ENCODE measurements at regions of chr11 and their contacts with region 1.

Region 1: DNA sequence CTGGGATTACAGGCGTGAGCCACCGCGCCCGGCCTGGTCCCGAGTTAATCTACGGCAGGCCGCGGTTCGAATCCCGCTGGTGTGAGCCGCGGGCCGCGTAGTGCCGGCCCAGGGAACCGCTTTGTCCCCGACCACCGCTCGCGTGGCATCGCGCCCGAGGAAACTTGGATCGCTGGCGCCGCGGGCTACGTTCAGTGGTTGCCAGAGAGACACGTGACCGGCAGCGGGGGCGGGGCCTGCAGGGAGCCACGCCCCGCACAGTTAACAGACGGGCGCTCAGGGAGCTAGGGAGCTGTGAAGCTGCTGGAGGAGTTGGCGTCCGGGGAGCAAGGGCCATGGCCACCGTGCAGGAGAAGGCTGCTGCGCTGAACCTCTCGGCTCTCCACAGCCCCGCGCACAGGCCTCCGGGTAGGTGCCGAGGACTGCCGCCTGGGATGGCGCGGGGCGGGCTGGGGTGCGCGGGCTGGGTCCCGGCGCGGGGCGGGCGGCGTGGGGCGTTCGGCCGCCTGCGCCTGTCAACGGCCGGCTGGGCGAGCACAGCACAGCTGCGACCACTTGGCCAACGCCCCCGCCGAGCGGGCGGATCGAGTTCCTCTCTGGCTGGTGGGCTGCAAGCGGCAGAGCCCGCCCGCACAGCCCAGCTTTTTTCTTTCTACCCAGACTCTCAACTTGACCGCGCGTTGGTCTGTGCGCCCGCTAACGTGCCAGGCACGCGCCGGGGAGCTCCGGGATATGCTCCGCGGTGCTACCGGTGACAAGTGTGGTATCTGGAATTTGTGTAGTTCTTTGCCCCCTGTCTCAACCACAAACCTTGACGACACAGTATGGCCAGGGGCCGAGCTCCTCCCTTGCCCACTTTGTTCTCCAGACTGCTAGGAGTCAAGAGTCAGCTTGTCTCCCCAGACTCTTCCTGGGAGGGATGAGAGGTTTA is at the start of gene DEPDC7:
- DNase-seq: peak; percentile 94 to 96
- H3K4me3 ChIP-seq: peak within 1 kb of the TSS; percentile 73
- H3K4me3 Mint-ChIP-seq: peak within 1 kb of the TSS; percentile 98
- H3K27ac Mint-ChIP-seq: peak within 1 kb of the TSS; percentile 87
- H3K4me1 ChIP-seq: peaks cover 26% of the 10 kb centered on the region; the same call in 1 of the 2 replicates
- H3K4me1 Mint-ChIP-seq: peaks cover 19% of the 10 kb centered on the region
- H3K27me3 ChIP-seq: no peaks in the 10 kb centered on the region
- H3K27me3 Mint-ChIP-seq: no peaks in the 10 kb centered on the region
- CTCF ChIP-seq: no peak
- total RNA-seq, gene DEPDC7: 17.0 and 17.2 TPM in 2 replicates

Region 2: DNA sequence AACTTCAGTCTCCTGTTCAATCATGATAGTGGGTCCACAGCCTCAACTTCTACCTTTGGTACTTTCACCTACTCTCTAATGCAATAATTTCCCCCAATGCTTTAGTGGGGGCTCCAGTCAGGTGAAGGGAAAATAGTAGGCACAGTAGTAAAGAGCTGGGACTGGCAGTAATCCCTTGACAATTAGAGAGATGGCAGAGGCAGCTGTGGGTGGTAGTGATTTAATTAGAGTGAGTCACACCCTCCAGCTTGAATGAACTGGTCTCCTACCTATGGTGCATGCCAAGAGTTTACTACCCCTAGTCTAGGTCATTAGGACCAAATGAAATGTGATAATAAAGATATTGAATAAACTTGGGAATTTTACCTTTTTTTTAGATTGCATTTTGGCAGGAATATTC is 177.4 kb before region 1 on chr11:
- CTCF ChIA-PET with region 1: no interaction called
- POLR2A ChIA-PET with region 1: no interaction called
- intact Hi-C with region 1: no loop called
- DNase-seq: no peak
- H3K4me3 ChIP-seq: no peak overlapping the region
- H3K4me3 Mint-ChIP-seq: no peak overlapping the region
- H3K27ac Mint-ChIP-seq: no peak overlapping the region
- H3K4me1 ChIP-seq: peaks cover 10% of the 10 kb centered on the region
- H3K4me1 Mint-ChIP-seq: peaks cover 9% of the 10 kb centered on the region
- H3K27me3 ChIP-seq: no peaks in the 10 kb centered on the region
- H3K27me3 Mint-ChIP-seq: no peaks in the 10 kb centered on the region
- CTCF ChIP-seq: no peak

Region 3: GRCh38 chr11:32960553-32961164 is 55.2 kb before region 1 on chr11:
- CTCF ChIA-PET with region 1: no interaction called
- POLR2A ChIA-PET with region 1: no interaction called
- intact Hi-C with region 1: loop called (anchors 2 kb)
- DNase-seq: peak in 1 of 2 experiments; percentile 40
- H3K4me3 ChIP-seq: no peak overlapping the region
- H3K4me3 Mint-ChIP-seq: no peak overlapping the region
- H3K27ac Mint-ChIP-seq: no peak overlapping the region
- H3K4me1 ChIP-seq: no peaks in the 10 kb centered on the region
- H3K4me1 Mint-ChIP-seq: no peaks in the 10 kb centered on the region
- H3K27me3 ChIP-seq: no peaks in the 10 kb centered on the region
- H3K27me3 Mint-ChIP-seq: no peaks in the 10 kb centered on the region
- CTCF ChIP-seq: peak; percentile 58 to 60

Region 4: GRCh38 chr11:33027846-33028536 is 12.1 kb after region 1 on chr11:
- CTCF ChIA-PET with region 1: no interaction called
- POLR2A ChIA-PET with region 1: interaction called, 6 read pairs
- intact Hi-C with region 1: loop called (anchors 1 kb)
- DNase-seq: no peak
- H3K4me3 ChIP-seq: no peak overlapping the region
- H3K4me3 Mint-ChIP-seq: peak overlapping the region; percentile 38
- H3K27ac Mint-ChIP-seq: peak overlapping the region; percentile 74
- H3K4me1 ChIP-seq: peaks cover 22% of the 10 kb centered on the region
- H3K4me1 Mint-ChIP-seq: peaks cover 25% of the 10 kb centered on the region
- H3K27me3 ChIP-seq: no peaks in the 10 kb centered on the region
- H3K27me3 Mint-ChIP-seq: no peaks in the 10 kb centered on the region
- CTCF ChIP-seq: no peak

Region 5: GRCh38 chr11:33039274-33040032 is 23.6 kb after region 1 on chr11 and contains the start of gene TCP11L1:
- CTCF ChIA-PET with region 1: interaction called, 15 read pairs
- POLR2A ChIA-PET with region 1: interaction called, 31 read pairs
- intact Hi-C with region 1: loop called (anchors 1 kb)
- DNase-seq: peak; percentile 93 to 94
- H3K4me3 ChIP-seq: peak within 1 kb of the TSS; percentile 80
- H3K4me3 Mint-ChIP-seq: peak within 1 kb of the TSS; percentile 80
- H3K27ac Mint-ChIP-seq: peak within 1 kb of the TSS; percentile 96
- H3K4me1 ChIP-seq: peaks cover 24% of the 10 kb centered on the region
- H3K4me1 Mint-ChIP-seq: peaks cover 19% of the 10 kb centered on the region
- H3K27me3 ChIP-seq: no peaks in the 10 kb centered on the region
- H3K27me3 Mint-ChIP-seq: no peaks in the 10 kb centered on the region
- CTCF ChIP-seq: no peak
- total RNA-seq, gene TCP11L1: 22.8 and 25.0 TPM in 2 replicates

Region 6: DNA sequence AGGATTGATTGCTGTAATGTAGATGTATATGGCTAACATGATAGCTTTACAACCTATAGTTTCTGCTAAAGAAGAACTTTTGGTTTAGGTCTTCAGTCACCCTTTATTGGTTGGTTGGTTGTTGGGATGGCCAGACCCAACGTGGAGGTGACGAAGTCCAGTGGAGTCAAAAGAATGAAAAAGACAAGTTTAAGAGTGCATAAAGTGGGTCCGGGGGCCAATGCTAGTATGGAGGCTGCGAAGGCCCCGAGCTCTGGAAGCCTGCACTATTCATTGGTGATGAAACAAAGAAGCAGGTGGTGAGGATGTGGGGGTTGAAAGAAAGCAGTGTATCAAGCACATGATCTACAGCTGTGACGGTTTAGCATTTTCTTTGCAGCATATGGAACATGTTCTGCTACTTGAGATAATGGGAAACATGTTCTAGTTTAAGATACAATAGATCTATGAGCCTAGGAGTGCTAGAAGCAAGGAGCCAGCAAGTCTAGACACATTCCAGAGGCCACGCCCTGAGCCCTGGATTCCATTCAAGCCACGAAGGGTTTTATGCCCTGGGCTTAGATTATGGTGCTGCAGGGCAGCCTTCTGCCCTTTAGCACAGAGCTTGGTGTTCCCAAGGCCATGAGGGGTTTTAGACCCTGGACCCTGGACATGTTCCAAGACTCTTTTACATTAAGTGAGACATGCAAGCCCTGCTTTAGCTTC is 29.8 kb after region 1 on chr11:
- CTCF ChIA-PET with region 1: no interaction called
- POLR2A ChIA-PET with region 1: interaction called, 3 read pairs
- intact Hi-C with region 1: loop called (anchors 1 kb)
- DNase-seq: peak; percentile 45 to 76
- H3K4me3 ChIP-seq: no peak overlapping the region
- H3K4me3 Mint-ChIP-seq: no peak overlapping the region
- H3K27ac Mint-ChIP-seq: peak overlapping the region; percentile 40
- H3K4me1 ChIP-seq: peaks cover 38% of the 10 kb centered on the region
- H3K4me1 Mint-ChIP-seq: peaks cover 16% of the 10 kb centered on the region
- H3K27me3 ChIP-seq: no peaks in the 10 kb centered on the region
- H3K27me3 Mint-ChIP-seq: no peaks in the 10 kb centered on the region
- CTCF ChIP-seq: no peak

Region 7: GRCh38 chr11:33060271-33060670 is 44.4 kb after region 1 on chr11:
- CTCF ChIA-PET with region 1: interaction called, 12 read pairs
- POLR2A ChIA-PET with region 1: interaction called, 5 read pairs
- intact Hi-C with region 1: loop called (anchors 2 kb)
- DNase-seq: no peak
- H3K4me3 ChIP-seq: no peak overlapping the region
- H3K4me3 Mint-ChIP-seq: no peak overlapping the region
- H3K27ac Mint-ChIP-seq: peak overlapping the region; percentile 7
- H3K4me1 ChIP-seq: peaks cover 37% of the 10 kb centered on the region
- H3K4me1 Mint-ChIP-seq: peaks cover 24% of the 10 kb centered on the region
- H3K27me3 ChIP-seq: no peaks in the 10 kb centered on the region
- H3K27me3 Mint-ChIP-seq: no peaks in the 10 kb centered on the region
- CTCF ChIP-seq: no peak

Region 8: GRCh38 chr11:33317662-33318061 is 301.8 kb after region 1 on chr11:
- CTCF ChIA-PET with region 1: no interaction called
- POLR2A ChIA-PET with region 1: no interaction called
- intact Hi-C with region 1: no loop called
- DNase-seq: no peak
- H3K4me3 ChIP-seq: no peak overlapping the region
- H3K4me3 Mint-ChIP-seq: no peak overlapping the region
- H3K27ac Mint-ChIP-seq: no peak overlapping the region
- H3K4me1 ChIP-seq: peaks cover 21% of the 10 kb centered on the region
- H3K4me1 Mint-ChIP-seq: no peaks in the 10 kb centered on the region
- H3K27me3 ChIP-seq: no peaks in the 10 kb centered on the region
- H3K27me3 Mint-ChIP-seq: no peaks in the 10 kb centered on the region
- CTCF ChIP-seq: no peak